HEK293T (cell line): ENCODE measurements at regions of chrX and their contacts with region 1.

Region 1: DNA sequence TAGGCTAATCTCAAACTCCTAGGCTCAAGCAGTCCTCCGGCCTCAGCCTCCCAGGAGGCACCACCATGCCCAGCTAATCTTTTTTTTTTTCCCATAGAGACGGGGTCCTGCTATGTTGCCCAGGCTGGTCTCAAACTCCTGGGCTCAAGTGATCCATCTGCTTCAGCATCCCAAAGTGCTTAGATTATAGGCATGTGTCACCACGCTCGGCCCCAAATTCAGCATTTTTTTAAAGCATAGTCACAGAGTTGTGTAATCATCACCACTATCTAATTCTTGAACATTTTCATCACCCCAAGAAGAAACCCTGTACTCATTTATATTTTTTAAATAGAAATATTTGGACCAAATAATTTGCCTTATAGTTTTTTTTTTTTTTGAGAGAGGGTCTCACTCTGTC is 10.3 kb downstream of the CENPI start:
- DNase-seq: no peak

Region 2: DNA sequence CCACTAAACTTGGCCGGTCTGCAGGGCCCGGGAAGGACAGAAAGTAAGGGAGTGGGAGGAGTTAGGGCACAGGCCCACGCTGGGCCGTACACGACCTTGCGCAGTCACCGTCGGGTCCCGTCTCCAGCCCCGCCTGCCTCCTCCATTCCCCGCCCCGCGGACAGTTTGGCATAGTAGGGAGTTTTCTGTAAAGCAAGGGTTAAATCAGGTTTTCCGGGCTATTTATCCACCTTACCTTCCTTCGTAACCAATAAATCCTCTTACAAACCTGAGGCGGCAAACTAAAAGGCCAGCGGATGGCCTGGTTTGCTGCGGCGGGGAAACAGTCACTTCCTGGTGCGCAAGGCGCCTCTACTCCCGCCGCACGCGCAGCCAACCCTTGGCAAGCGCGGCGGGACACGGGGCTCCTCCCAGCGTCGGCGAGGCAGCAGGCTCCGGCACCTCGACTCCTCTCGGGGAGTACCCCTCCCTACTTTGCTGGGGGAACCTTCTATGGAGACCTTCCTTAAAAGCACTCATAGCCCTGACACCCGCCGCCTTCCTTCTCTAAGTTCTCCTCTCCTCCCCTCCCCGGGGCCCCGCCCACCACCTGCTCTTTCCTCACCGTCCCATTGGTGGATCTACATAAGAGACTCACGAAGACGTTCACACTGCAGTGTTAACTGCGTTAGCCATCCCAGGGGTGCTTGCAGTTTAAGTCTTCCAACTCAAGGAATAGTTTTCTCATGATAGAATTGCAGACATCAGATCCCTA is 56.6 kb before region 1 on chrX and contains the start of gene TRMT2B:
- CTCF ChIA-PET with region 1: interaction called, 12 read pairs
- POLR2A ChIA-PET with region 1: interaction called, 3 read pairs
- DNase-seq: peak; percentile 79

Region 3: DNA sequence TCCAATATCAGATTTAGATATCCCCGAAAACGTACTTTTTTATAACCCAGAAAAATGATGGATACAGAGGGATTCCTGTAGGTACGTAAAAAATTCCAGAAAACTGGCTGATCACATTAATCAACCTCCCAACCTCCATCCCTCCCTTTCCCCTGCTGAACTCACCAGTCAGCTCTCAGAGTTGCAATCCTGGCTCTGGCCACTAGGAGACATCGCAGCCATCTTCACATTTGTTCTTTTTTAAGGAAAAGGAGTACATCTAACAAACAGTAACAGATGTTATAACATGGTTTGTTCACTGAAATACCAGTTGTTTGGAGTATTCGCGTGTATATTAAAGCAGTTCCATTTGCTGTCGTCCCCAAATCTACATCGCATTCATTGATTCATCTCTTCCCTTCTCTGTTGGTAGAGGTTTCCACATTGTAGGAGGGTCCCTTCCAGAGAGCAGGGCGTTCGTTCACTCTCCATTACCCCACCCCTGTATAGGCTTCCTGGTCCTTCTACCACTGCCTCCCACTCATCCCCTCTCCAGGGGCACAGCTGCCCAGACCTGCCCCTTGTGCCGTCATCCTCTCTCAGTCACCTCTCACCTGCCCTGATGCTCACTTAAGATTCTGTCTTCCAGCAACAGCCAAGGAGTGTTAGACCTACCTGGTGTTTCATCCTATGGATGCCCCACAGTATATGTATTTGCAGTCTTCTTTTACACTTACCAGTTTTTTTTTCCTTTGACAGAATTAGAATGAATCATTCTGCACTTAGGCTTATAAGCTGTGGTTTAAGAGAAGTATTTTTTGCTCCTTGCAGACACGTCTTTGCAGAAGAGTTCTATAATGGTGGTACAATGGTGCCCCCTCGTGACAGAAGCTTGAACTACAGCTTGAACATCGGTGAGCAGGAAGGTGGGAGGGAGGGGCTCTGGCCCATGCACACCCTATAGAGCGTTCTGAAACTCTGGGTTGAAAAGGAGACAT is 1791.9 kb after region 1 on chrX:
- CTCF ChIA-PET with region 1: no interaction called
- POLR2A ChIA-PET with region 1: no interaction called
- DNase-seq: peak; percentile 76